ENCODE measurements at regions of chr10 and their contacts with region 1.

Region 1: GRCh38 chr10:8379906-8380832 is 325.7 kb downstream of the GATA3 start:
- DNase-seq: peak; percentile 84 to 89
- H3K4me3 ChIP-seq: no peak overlapping the region
- H3K4me3 Mint-ChIP-seq: peak overlapping the region; percentile 62
- H3K27ac Mint-ChIP-seq: peak overlapping the region; percentile 90
- H3K4me1 ChIP-seq: peaks cover 37% of the 10 kb centered on the region
- H3K4me1 Mint-ChIP-seq: peaks cover 35% of the 10 kb centered on the region
- H3K27me3 ChIP-seq: no peaks in the 10 kb centered on the region
- H3K27me3 Mint-ChIP-seq: no peaks in the 10 kb centered on the region
- CTCF ChIP-seq: no peak

Region 2: GRCh38 chr10:8102708-8103401 is 277.3 kb before region 1 on chr10:
- CTCF ChIA-PET with region 1: no interaction called
- POLR2A ChIA-PET with region 1: no interaction called
- intact Hi-C with region 1: loop called (anchors 1 kb)
- DNase-seq: peak; percentile 91 to 93
- H3K4me3 ChIP-seq: peak overlapping the region; percentile 21
- H3K4me3 Mint-ChIP-seq: peak overlapping the region; percentile 75
- H3K27ac Mint-ChIP-seq: peak overlapping the region; percentile 90
- H3K4me1 ChIP-seq: peaks cover 49% of the 10 kb centered on the region
- H3K4me1 Mint-ChIP-seq: peaks cover 38% of the 10 kb centered on the region
- H3K27me3 ChIP-seq: no peaks in the 10 kb centered on the region
- H3K27me3 Mint-ChIP-seq: no peaks in the 10 kb centered on the region
- CTCF ChIP-seq: no peak

Region 3: GRCh38 chr10:8260645-8261044 is 119.5 kb before region 1 on chr10:
- CTCF ChIA-PET with region 1: no interaction called
- POLR2A ChIA-PET with region 1: no interaction called
- intact Hi-C with region 1: no loop called
- DNase-seq: no peak
- H3K4me3 ChIP-seq: no peak overlapping the region
- H3K4me3 Mint-ChIP-seq: no peak overlapping the region
- H3K27ac Mint-ChIP-seq: no peak overlapping the region
- H3K4me1 ChIP-seq: no peaks in the 10 kb centered on the region
- H3K4me1 Mint-ChIP-seq: no peaks in the 10 kb centered on the region
- H3K27me3 ChIP-seq: peaks cover 2% of the 10 kb centered on the region; the same call in 1 of the 2 replicates
- H3K27me3 Mint-ChIP-seq: no peaks in the 10 kb centered on the region
- CTCF ChIP-seq: no peak

Region 4: GRCh38 chr10:8305876-8306652 is 74.1 kb before region 1 on chr10:
- CTCF ChIA-PET with region 1: no interaction called
- POLR2A ChIA-PET with region 1: no interaction called
- intact Hi-C with region 1: no loop called
- DNase-seq: no peak
- H3K4me3 ChIP-seq: no peak overlapping the region
- H3K4me3 Mint-ChIP-seq: no peak overlapping the region
- H3K27ac Mint-ChIP-seq: no peak overlapping the region
- H3K4me1 ChIP-seq: no peaks in the 10 kb centered on the region
- H3K4me1 Mint-ChIP-seq: no peaks in the 10 kb centered on the region
- H3K27me3 ChIP-seq: no peaks in the 10 kb centered on the region
- H3K27me3 Mint-ChIP-seq: no peaks in the 10 kb centered on the region
- CTCF ChIP-seq: no peak

Region 5: GRCh38 chr10:8350351-8350967 is 29.7 kb before region 1 on chr10:
- CTCF ChIA-PET with region 1: no interaction called
- POLR2A ChIA-PET with region 1: no interaction called
- intact Hi-C with region 1: loop called (anchors 1 kb)
- DNase-seq: peak in 1 of 2 experiments; percentile 61
- H3K4me3 ChIP-seq: no peak overlapping the region
- H3K4me3 Mint-ChIP-seq: peak overlapping the region; percentile 44
- H3K27ac Mint-ChIP-seq: peak overlapping the region; percentile 60
- H3K4me1 ChIP-seq: peaks cover 55% of the 10 kb centered on the region
- H3K4me1 Mint-ChIP-seq: peaks cover 43% of the 10 kb centered on the region
- H3K27me3 ChIP-seq: no peaks in the 10 kb centered on the region
- H3K27me3 Mint-ChIP-seq: no peaks in the 10 kb centered on the region
- CTCF ChIP-seq: no peak

Region 6: DNA sequence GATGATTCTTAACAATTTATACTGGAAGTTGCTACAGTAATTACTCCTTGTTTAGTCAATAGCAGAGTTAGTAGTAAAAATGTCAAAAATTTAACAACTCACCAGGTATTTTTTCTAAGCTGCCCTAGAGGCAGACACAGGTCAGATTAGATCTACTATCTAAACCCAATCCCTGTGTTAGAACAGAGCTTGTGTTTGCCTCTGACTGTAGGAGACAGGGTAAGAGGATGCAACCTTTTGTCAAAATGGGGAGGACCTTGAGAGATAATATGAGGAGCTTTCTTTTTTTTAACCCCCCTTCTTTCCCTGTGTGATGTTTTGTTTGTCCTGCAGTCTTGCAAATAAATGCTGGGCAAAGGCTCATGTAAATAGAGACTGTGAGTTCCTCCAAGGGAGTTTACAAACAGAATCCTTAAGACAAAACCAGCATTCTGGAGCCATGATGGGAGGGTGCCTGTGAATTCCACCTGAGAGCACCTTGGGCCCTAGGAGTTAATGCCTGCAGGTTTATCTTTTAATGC is 27.4 kb after region 1 on chr10:
- CTCF ChIA-PET with region 1: no interaction called
- POLR2A ChIA-PET with region 1: no interaction called
- intact Hi-C with region 1: loop called (anchors 1 kb)
- DNase-seq: peak; percentile 60 to 70
- H3K4me3 ChIP-seq: no peak overlapping the region
- H3K4me3 Mint-ChIP-seq: peak overlapping the region; percentile 19
- H3K27ac Mint-ChIP-seq: peak overlapping the region; percentile 15
- H3K4me1 ChIP-seq: peaks cover 46% of the 10 kb centered on the region
- H3K4me1 Mint-ChIP-seq: peaks cover 48% of the 10 kb centered on the region
- H3K27me3 ChIP-seq: no peaks in the 10 kb centered on the region
- H3K27me3 Mint-ChIP-seq: no peaks in the 10 kb centered on the region
- CTCF ChIP-seq: no peak

Region 7: GRCh38 chr10:8416192-8416701 is 36.1 kb after region 1 on chr10:
- CTCF ChIA-PET with region 1: no interaction called
- POLR2A ChIA-PET with region 1: no interaction called
- intact Hi-C with region 1: loop called (anchors 1 kb)
- DNase-seq: peak in 1 of 2 experiments; percentile 27
- H3K4me3 ChIP-seq: no peak overlapping the region
- H3K4me3 Mint-ChIP-seq: no peak overlapping the region
- H3K27ac Mint-ChIP-seq: peak overlapping the region; percentile 57
- H3K4me1 ChIP-seq: peaks cover 48% of the 10 kb centered on the region
- H3K4me1 Mint-ChIP-seq: peaks cover 58% of the 10 kb centered on the region
- H3K27me3 ChIP-seq: no peaks in the 10 kb centered on the region
- H3K27me3 Mint-ChIP-seq: no peaks in the 10 kb centered on the region
- CTCF ChIP-seq: no peak

Region 8: DNA sequence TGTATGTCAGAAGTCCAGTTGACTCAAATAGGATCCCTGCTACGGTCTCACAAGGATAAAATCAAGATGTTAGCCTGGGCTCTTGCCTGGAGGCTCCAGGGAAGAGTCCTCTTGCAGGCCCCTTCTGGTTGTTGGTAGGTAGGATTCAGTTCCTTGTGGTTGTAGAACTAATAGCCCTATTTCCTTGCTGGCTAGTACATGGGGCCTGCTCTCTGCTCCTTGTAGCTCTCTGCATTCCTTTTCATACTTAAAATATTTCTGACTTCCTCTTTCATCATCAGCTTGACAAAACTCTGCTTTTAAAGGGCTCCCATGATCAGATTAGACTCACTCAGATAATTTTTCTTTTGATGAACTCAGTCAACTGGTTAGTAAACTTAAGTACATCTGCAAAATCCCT is 431.0 kb after region 1 on chr10:
- CTCF ChIA-PET with region 1: no interaction called
- POLR2A ChIA-PET with region 1: no interaction called
- intact Hi-C with region 1: no loop called
- DNase-seq: no peak
- H3K4me3 ChIP-seq: no peak overlapping the region
- H3K4me3 Mint-ChIP-seq: no peak overlapping the region
- H3K27ac Mint-ChIP-seq: no peak overlapping the region
- H3K4me1 ChIP-seq: no peaks in the 10 kb centered on the region
- H3K4me1 Mint-ChIP-seq: no peaks in the 10 kb centered on the region
- H3K27me3 ChIP-seq: no peaks in the 10 kb centered on the region
- H3K27me3 Mint-ChIP-seq: no peaks in the 10 kb centered on the region
- CTCF ChIP-seq: no peak

Measured in Caco-2 (cell line).